ENCODE measurements at regions of chr10 and their contacts with region 1.

Region 1: GRCh38 chr10:68537796-68538195 is 10.5 kb upstream of the SLC25A16 start:
- DNase-seq: no peak
- H3K4me3 ChIP-seq: no peak overlapping the region
- H3K27ac ChIP-seq: no peak overlapping the region
- H3K4me1 ChIP-seq: peaks cover 0 to 5% (median 0%) of the 10 kb centered on the region in 4 donors
- H3K27me3 ChIP-seq: no peaks in the 10 kb centered on the region
- CTCF ChIP-seq: no peak
- EP300 ChIP-seq: no peak
- POLR2A ChIP-seq: no peak

Region 2: DNA sequence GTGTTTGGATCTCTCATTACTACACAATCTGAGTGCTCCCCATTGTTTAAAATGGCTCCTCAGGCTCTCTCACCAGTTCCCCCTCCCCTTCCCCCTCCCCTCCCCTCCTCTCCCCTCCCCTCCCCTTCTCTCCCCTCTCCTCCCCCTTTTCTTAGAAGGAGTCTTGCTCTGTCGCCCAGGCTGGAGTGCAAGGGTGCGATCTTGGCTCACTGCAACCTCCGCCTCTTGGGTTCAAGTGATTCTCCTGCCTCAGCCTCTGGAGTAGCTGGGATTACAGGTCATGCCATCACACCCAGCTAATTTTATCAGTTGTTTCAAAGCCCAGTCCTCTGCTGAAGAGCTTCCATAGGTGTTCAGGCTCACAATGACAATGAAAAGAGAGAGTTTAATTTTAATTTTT is 179.6 kb after region 1 on chr10:
- intact Hi-C with region 1: loop called (anchors 10 kb)
- DNase-seq: no peak
- H3K4me3 ChIP-seq: no peak overlapping the region
- H3K27ac ChIP-seq: no peak overlapping the region
- H3K4me1 ChIP-seq: peaks cover 2 to 7% (median 5%) of the 10 kb centered on the region in 4 donors
- H3K27me3 ChIP-seq: no peaks in the 10 kb centered on the region
- CTCF ChIP-seq: no peak
- EP300 ChIP-seq: no peak
- POLR2A ChIP-seq: no peak

Measured in stomach (tissue), 19 donors.